Activated CD4-positive, alpha-beta T cell treated with anti-CD3 and anti-CD28 coated beads, Interleukin-2, amount 10 ng/mL, durations not matched to agents 24 days and 14 days (primary cell): ENCODE measurements at regions of chr1 and their contacts with region 1.

Region 1: GRCh38 chr1:167104256-167104633 is 10.4 kb downstream of the STYXL2 start:
- DNase-seq: peak; percentile 67
- H3K4me3 Mint-ChIP-seq: peak overlapping the region; percentile 36
- H3K27ac Mint-ChIP-seq: peak overlapping the region; percentile 48
- H3K4me1 Mint-ChIP-seq: peaks cover 37% of the 10 kb centered on the region
- H3K27me3 Mint-ChIP-seq: peaks cover 5% of the 10 kb centered on the region

Region 2: GRCh38 chr1:167086033-167086432 is 18.2 kb before region 1 on chr1:
- intact Hi-C with region 1: loop called (anchors 2 kb)
- DNase-seq: no peak
- H3K4me3 Mint-ChIP-seq: no peak overlapping the region
- H3K27ac Mint-ChIP-seq: no peak overlapping the region
- H3K4me1 Mint-ChIP-seq: peaks cover 16% of the 10 kb centered on the region
- H3K27me3 Mint-ChIP-seq: peaks cover 4% of the 10 kb centered on the region